Left ventricle myocardium inferior (tissue), 1 donor: ENCODE measurements at regions of chr2 and their contacts with region 1.

Region 1: GRCh38 chr2:54838585-54839035 is 115.1 kb downstream of the EML6 start:
- DNase-seq: peak; percentile 44
- H3K4me3 ChIP-seq: no peak overlapping the region
- H3K27ac ChIP-seq: no peak overlapping the region
- H3K4me1 ChIP-seq: peaks cover 3% of the 10 kb centered on the region
- H3K27me3 ChIP-seq: peaks cover 11% of the 10 kb centered on the region
- CTCF ChIP-seq: peak; percentile 95

Region 2: DNA sequence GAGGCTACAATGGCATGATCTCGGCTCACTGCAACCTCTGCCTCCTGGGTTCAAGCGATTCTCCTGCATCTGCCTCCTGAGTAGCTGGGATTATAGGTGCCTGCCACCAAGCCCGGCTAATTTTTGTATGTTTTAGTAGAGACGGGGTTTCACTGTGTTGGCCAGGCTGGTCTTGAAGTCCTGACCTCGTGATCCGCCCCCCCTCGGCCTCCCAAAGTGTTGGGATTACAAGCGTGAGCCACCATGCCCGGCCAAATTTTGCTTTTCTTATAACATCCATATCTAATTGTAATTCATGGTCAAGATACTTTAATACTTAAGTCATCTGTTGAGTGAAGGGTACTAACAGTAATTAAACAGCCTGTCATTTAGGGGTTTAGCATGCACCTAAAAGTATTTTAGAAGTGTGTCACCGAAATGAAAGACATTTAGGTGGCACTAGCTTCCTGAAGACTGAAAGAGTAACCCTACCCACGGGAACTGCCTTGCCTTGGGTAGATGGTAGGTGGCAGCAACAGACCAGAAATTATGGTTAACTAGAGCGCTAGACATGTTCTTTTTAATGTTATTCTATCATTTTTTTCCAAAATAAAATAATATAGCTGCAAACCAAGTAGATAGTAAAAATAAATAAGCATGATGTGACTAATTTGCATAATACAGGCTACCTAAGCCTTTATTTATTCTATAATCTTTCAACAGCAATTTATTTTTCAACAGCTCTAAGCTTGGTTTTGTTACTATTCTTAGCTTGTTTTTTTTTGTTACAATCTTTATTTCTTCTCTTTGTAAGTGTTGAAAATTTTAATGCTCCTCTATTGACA is 731.8 kb before region 1 on chr2:
- intact Hi-C with region 1: loop called (anchors 10 kb)
- DNase-seq: no peak
- H3K4me3 ChIP-seq: no peak overlapping the region
- H3K27ac ChIP-seq: no peak overlapping the region
- H3K4me1 ChIP-seq: peaks cover 7% of the 10 kb centered on the region
- H3K27me3 ChIP-seq: no peaks in the 10 kb centered on the region
- CTCF ChIP-seq: peak; percentile 73